PC-9 (cell line): ENCODE measurements at regions of chr21 and their contacts with region 1.

Region 1: DNA sequence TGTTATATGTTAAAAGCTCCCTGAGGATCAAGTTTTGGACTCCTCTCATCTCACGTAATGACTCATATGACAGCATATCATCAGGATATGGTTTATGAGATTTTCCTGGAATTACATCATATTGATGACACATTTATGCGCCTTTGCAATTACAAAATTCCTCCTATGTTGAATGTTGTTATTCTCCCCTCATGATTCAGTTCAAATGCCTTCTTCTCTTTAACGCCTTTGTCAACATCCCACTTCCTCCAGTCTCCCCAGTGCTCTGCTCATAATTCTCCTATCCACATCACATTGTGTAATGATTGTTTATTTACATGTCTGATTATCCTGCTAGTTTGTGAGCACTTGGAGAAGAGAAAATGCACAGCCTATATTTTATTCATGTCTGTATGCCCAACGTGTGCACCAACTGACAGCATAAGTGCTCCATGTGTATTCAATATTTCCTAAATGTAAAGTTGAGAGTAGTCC is 80.9 kb upstream of the BACH1 start:
- DNase-seq: peak in 1 of 2 experiments; percentile 92
- H3K4me3 ChIP-seq: no peak overlapping the region
- H3K27ac ChIP-seq: peak overlapping the region; percentile 93
- H3K4me1 ChIP-seq: peaks cover 36% of the 10 kb centered on the region
- H3K27me3 ChIP-seq: no peaks in the 10 kb centered on the region
- CTCF ChIP-seq: no peak

Region 2: GRCh38 chr21:29091032-29091431 is 126.8 kb before region 1 on chr21:
- CTCF ChIA-PET with region 1: no interaction called
- POLR2A ChIA-PET with region 1: no interaction called
- intact Hi-C with region 1: no loop called
- DNase-seq: peak in 1 of 2 experiments; percentile 67
- H3K4me3 ChIP-seq: no peak overlapping the region
- H3K27ac ChIP-seq: no peak overlapping the region
- H3K4me1 ChIP-seq: peaks cover 16% of the 10 kb centered on the region
- H3K27me3 ChIP-seq: no peaks in the 10 kb centered on the region
- CTCF ChIP-seq: no peak

Region 3: GRCh38 chr21:29181799-29182470 is 35.9 kb before region 1 on chr21:
- CTCF ChIA-PET with region 1: no interaction called
- POLR2A ChIA-PET with region 1: interaction called, 3 read pairs
- intact Hi-C with region 1: loop called (anchors 5 kb)
- DNase-seq: peak in 1 of 2 experiments; percentile 88
- H3K4me3 ChIP-seq: peak overlapping the region; percentile 42; the same call in 1 of the 2 replicates
- H3K27ac ChIP-seq: peak overlapping the region; percentile 99
- H3K4me1 ChIP-seq: peaks cover 71% of the 10 kb centered on the region
- H3K27me3 ChIP-seq: no peaks in the 10 kb centered on the region
- CTCF ChIP-seq: no peak

Region 4: GRCh38 chr21:29195981-29196669 is 21.7 kb before region 1 on chr21:
- CTCF ChIA-PET with region 1: no interaction called
- POLR2A ChIA-PET with region 1: no interaction called
- intact Hi-C with region 1: loop called (anchors 1 kb)
- DNase-seq: peak; percentile 39 to 87
- H3K4me3 ChIP-seq: no peak overlapping the region
- H3K27ac ChIP-seq: peak overlapping the region; percentile 92
- H3K4me1 ChIP-seq: peaks cover 65% of the 10 kb centered on the region
- H3K27me3 ChIP-seq: no peaks in the 10 kb centered on the region
- CTCF ChIP-seq: peak; percentile 49